Sigmoid colon (tissue), 7 donors: ENCODE measurements at regions of chr3 and their contacts with region 1.

Region 1: GRCh38 chr3:30693470-30694120 is 87.2 kb downstream of the TGFBR2 start:
- DNase-seq: peak; percentile 72
- H3K4me3 ChIP-seq: no peak overlapping the region
- H3K27ac ChIP-seq: peak overlapping the region; percentile 72 to 83 (median 75)
- H3K4me1 ChIP-seq: peaks cover 0 to 74% (median 62%) of the 10 kb centered on the region in 4 donors
- H3K27me3 ChIP-seq: no peaks in the 10 kb centered on the region
- CTCF ChIP-seq: peak; percentile 79 to 88 (median 82)
- EP300 ChIP-seq: no peak
- POLR2A ChIP-seq: no peak

Region 2: DNA sequence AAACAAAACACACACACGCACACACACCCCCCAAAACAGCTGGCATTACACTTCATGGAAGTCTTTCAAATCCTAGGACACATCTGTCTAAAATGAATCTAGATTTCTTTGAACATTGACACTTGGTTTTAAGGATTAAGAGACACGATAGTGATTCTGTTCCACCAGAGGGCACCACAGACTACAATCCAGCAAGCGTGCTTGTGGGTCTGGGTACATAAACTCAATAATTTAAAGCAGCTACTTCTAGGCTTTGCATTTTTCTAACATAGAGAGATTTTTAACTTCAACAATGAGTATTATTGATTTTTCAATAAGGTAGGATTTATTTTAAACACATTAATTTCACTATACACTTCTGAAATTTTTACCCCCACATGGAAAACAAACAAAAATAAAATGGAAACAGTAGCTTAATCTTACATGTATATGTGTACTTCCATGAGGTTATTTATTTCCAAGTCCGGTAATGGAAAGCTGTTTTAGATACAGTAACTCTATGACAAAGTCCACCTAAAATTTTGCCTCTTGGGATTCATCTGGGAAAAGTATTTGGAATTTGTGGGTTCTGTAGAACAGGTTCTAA is 651.2 kb before region 1 on chr3:
- intact Hi-C with region 1: loop called (anchors 5 kb)
- DNase-seq: peak; percentile 71
- H3K4me3 ChIP-seq: no peak overlapping the region
- H3K27ac ChIP-seq: no peak overlapping the region
- H3K4me1 ChIP-seq: peaks cover 0 to 5% (median 0%) of the 10 kb centered on the region in 4 donors
- H3K27me3 ChIP-seq: no peaks in the 10 kb centered on the region
- CTCF ChIP-seq: peak; percentile 51 to 75 (median 70)
- EP300 ChIP-seq: no peak
- POLR2A ChIP-seq: no peak

Region 3: GRCh38 chr3:30199096-30199759 is 494.4 kb before region 1 on chr3:
- intact Hi-C with region 1: loop called (anchors 5 kb)
- DNase-seq: peak; percentile 85
- H3K4me3 ChIP-seq: no peak overlapping the region
- H3K27ac ChIP-seq: no peak overlapping the region
- H3K4me1 ChIP-seq: peaks cover 0 to 12% (median 5%) of the 10 kb centered on the region in 4 donors
- H3K27me3 ChIP-seq: no peaks in the 10 kb centered on the region
- CTCF ChIP-seq: peak; percentile 18 to 86 (median 75)
- EP300 ChIP-seq: no peak
- POLR2A ChIP-seq: no peak

Region 4: DNA sequence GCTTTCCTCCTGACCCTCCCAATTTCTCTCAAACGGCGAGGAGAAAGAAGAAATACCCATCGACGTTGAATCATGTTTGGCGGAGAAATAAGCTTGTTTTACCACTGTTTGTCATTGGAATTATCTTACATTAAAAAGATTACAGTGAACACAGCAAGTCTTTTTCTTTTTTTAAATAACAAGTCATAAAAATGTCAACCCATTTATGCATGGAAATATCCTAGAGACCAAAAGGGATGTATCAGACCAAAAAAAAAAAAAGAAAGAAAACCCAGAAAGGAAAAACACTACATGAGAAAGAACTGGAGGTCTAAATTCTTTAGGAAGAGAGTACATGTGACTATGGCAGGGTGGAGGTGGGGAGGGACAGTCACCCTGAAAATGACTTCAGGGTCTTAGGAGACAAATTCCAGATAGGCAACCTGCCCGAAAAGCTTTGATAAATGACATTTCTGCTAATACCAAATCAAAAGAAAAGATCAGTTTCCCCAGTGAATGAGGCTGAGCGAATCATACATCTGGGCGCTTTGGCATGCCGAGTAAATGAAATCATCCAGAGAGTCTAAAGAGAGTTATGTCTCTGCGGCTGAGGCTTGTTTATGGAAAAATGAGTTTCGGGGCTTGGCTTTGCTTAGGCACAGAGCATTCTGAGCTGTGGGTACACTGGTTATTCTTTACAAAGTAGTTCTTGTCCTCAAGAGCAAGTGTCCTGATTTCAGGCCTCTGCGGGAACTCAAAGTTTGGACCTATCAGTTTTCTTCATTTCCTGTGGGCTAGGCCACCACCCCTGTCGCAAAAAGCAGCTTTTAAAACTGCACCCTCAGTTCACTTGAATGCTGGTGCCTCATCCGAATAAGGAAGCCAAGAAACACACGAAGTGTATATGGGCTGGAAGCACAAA is 197.3 kb before region 1 on chr3:
- intact Hi-C with region 1: loop called (anchors 5 kb)
- DNase-seq: peak; percentile 92
- H3K4me3 ChIP-seq: peak overlapping the region in 2 of 4 donors; percentile 15 to 21
- H3K27ac ChIP-seq: peak overlapping the region; percentile 86 to 93 (median 88)
- H3K4me1 ChIP-seq: peaks cover 0 to 82% (median 75%) of the 10 kb centered on the region in 4 donors
- H3K27me3 ChIP-seq: no peaks in the 10 kb centered on the region
- CTCF ChIP-seq: no peak
- EP300 ChIP-seq: peak; percentile 89 to 96 (median 92)
- POLR2A ChIP-seq: no peak

Region 5: GRCh38 chr3:30606301-30607031 is 87.1 kb before region 1 on chr3 and contains the start of gene TGFBR2:
- intact Hi-C with region 1: loop called (anchors 1 kb)
- DNase-seq: peak; percentile 99
- H3K4me3 ChIP-seq: peak within 1 kb of the TSS; percentile 80 to 96 (median 92)
- H3K27ac ChIP-seq: peak within 1 kb of the TSS; percentile 95 to 99 (median 98)
- H3K4me1 ChIP-seq: peaks cover 0 to 49% (median 20%) of the 10 kb centered on the region in 4 donors
- H3K27me3 ChIP-seq: no peaks in the 10 kb centered on the region
- CTCF ChIP-seq: peak in 1 of 4 experiments; percentile 28
- EP300 ChIP-seq: peak in 1 of 4 donors; percentile 52
- POLR2A ChIP-seq: peak; percentile 71 to 72
- total RNA-seq, gene TGFBR2: 215 to 243 (median 234) TPM

Region 6: DNA sequence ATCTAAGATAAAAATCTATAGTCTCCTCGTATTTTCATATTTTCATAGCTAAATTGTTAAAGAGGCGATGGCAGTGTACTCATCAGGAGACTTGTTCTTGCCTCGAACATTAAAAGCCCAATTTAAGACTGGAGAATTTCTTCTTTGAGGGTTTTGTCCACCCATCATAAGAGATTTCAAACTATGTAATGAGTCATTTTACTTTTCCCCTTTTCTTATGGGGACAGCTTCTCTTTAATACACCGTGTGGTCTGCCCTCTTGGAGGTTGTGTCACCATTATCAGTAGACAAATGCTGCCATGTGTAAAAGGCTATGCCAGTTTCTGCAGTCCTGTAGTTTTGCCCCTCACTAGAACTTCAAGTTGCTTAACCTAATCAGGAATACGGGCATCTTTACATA is 70.2 kb before region 1 on chr3:
- intact Hi-C with region 1: no loop called
- DNase-seq: no peak
- H3K4me3 ChIP-seq: no peak overlapping the region
- H3K27ac ChIP-seq: peak overlapping the region in 2 of 4 donors; percentile 36 to 38
- H3K4me1 ChIP-seq: peaks cover 0 to 93% (median 84%) of the 10 kb centered on the region in 4 donors
- H3K27me3 ChIP-seq: no peaks in the 10 kb centered on the region
- CTCF ChIP-seq: no peak
- EP300 ChIP-seq: no peak
- POLR2A ChIP-seq: no peak

Region 7: GRCh38 chr3:30793740-30794139 is 100.1 kb after region 1 on chr3:
- intact Hi-C with region 1: no loop called
- DNase-seq: no peak
- H3K4me3 ChIP-seq: no peak overlapping the region
- H3K27ac ChIP-seq: no peak overlapping the region
- H3K4me1 ChIP-seq: no peaks in the 10 kb centered on the region
- H3K27me3 ChIP-seq: no peaks in the 10 kb centered on the region
- CTCF ChIP-seq: no peak
- EP300 ChIP-seq: no peak
- POLR2A ChIP-seq: no peak